Head of caudate nucleus (tissue), 42 donors: ENCODE measurements at regions of chr18 and their contacts with region 1.

Region 1: DNA sequence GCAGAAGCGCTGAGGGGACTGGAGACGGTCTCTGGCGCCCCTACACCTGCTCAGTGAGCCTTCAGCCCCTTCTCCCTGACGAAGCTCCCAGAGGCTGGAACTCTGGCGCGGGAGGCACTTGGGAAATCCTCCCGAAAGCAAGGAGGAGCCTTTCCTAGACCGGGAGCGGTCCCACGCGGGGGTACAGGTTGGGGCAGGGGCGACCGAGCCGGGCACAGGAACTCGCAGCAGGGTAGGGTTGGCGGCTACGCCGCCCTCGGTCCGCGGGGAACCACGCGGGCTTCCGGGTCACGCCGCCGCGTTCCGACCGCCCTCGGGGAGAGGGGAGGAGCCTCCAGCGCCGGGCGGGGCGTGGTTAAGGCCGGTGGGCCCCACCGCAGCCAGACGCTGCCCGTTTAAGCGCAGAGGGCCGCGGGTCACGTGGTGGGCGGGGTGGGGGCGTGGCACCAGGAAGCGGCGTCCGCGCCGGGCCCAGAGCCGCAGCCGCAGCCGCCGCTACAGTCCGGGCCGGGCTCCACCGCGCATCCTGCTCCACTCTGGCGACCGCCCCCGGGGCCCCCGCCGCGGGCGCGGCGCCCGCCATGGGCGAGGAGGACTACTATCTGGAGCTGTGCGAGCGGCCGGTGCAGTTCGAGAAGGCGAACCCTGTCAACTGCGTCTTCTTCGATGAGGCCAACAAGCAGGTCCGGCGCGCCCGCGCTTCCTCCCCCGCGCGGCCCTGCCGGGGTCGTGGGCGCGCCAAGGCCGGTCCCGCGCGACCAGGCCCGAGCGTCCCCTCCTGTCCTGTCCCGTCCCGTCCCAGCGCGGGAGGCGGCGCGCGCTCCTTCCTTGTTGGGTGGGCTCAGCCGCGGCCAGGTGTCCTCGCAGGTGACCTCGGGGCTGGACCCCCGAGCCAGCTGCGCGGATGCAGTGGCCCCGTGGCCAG is at the start of gene RMC1:
- DNase-seq: peak; percentile 88 to 100 (median 98)

Region 2: GRCh38 chr18:23452728-23453679 is 50.3 kb before region 1 on chr18 and contains the start of gene RIOK3:
- intact Hi-C with region 1: loop called (anchors 2 kb)
- DNase-seq: peak; percentile 96 to 99 (median 98)

Region 3: GRCh38 chr18:23586249-23587196 is 83.2 kb after region 1 on chr18 and contains the start of gene NPC1:
- intact Hi-C with region 1: loop called (anchors 5 kb)
- DNase-seq: peak; percentile 77 to 97 (median 93)

Region 4: GRCh38 chr18:23812546-23813440 is 309.5 kb after region 1 on chr18:
- intact Hi-C with region 1: loop called (anchors 10 kb)
- DNase-seq: no peak